Tibial artery (tissue), 4 donors: ENCODE measurements at regions of chr22 and their contacts with region 1.

Region 1: DNA sequence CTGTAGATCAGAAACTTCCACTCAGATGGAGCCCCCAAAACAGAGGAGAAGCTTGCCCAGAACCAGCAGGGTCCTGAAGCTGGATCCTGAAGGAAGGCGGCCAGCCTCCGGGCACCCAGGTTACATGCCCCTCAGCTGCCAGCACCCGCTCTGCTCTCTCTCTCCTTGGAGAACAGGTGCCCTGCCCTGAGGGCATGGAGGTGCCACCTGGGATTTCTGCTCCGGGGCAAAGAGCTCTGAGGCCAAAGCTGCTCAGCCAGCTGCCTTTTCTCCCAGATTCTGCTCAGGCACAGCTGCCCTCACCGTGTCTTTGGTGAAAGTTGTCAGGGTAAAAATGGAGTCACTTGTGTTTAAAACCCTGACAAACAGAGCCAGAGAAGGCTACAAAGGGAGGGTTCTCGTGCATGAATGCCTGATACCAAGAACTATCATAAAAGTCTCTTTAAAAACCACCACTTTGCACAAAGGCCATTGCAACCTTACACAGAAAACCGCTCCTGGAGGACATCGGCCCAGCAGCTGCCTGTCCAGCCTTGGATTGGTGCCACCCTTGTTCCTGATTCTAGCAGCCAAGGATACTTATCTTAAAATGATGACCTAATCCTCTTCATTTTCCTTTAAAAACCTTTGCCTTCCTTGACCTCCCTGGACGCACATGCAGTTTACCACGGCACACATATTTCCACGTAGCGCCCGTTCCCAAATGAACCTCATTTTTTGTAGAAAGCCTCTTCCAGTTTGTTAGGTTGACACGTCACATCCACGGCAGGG is 140.0 kb downstream of the CACNA1I start:
- DNase-seq: no peak
- H3K4me3 ChIP-seq: no peak overlapping the region
- H3K27ac ChIP-seq: no peak overlapping the region
- H3K4me1 ChIP-seq: no peaks in the 10 kb centered on the region
- H3K27me3 ChIP-seq: peaks cover 0 to 70% of the 10 kb centered on the region in 2 donors
- CTCF ChIP-seq: no peak

Region 2: GRCh38 chr22:39471381-39472141 is 239.0 kb before region 1 on chr22:
- intact Hi-C with region 1: loop called (anchors 5 kb)
- DNase-seq: no peak
- H3K4me3 ChIP-seq: no peak overlapping the region
- H3K27ac ChIP-seq: no peak overlapping the region
- H3K4me1 ChIP-seq: peaks cover 0 to 9% (median 3%) of the 10 kb centered on the region in 4 donors
- H3K27me3 ChIP-seq: peaks cover 0 to 46% of the 10 kb centered on the region in 2 donors
- CTCF ChIP-seq: no peak

Region 3: DNA sequence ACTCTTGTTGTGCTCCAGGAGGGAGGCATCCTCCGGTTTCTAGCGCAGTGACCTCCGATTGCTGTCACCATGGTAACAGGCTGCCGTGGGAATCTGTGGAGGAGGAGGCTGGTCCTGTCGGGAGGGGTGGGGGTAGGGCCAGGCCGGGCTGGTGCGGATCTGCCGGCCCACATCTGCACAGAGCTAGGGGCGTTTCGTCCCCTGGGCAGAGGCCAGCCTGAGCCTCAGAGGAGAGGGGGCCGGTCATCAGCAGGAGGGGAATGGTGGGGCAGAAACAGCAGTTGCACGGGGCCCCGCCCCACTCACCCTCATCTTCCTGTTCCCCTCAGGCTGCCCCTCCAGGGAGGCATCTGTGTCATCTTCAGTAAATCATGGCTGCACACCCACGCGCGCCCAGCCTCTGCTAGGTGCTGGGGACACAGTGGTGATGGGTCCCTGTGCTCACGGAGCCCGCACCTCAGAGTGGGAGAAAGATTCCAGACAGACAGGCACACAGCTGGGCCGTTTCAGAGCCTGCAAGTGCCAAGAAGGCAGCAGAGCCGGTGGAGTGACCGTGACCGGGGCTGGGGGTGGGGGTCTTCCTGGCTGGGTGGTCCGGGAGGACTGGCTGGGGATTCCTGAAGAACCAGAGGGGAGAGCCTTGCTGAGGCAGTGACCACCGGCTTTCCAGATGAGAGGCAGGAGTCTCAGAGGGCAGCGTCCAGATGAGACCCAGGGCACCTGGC is 19.5 kb before region 1 on chr22:
- intact Hi-C with region 1: no loop called
- DNase-seq: no peak
- H3K4me3 ChIP-seq: no peak overlapping the region
- H3K27ac ChIP-seq: no peak overlapping the region
- H3K4me1 ChIP-seq: peaks cover 0 to 3% (median 0%) of the 10 kb centered on the region in 4 donors
- H3K27me3 ChIP-seq: peaks cover 0 to 83% of the 10 kb centered on the region in 2 donors
- CTCF ChIP-seq: no peak